ENCODE measurements at regions of chr3 and their contacts with region 1.

Region 1: GRCh38 chr3:39216176-39216790 is 23.9 kb upstream of the XIRP1 start:
- DNase-seq: peak; percentile 68
- ATAC-seq: peak; percentile 97
- H3K4me3 ChIP-seq: no peak overlapping the region
- H3K27ac ChIP-seq: no peak overlapping the region; the same call in 1 of the 2 replicates
- H3K4me1 ChIP-seq: peaks cover 26% of the 10 kb centered on the region
- H3K27me3 ChIP-seq: no peaks in the 10 kb centered on the region
- CTCF ChIP-seq: no peak
- EP300 ChIP-seq: peak; percentile 85 to 96
- POLR2A ChIP-seq: no peak
- RAD21 ChIP-seq: no peak

Region 2: DNA sequence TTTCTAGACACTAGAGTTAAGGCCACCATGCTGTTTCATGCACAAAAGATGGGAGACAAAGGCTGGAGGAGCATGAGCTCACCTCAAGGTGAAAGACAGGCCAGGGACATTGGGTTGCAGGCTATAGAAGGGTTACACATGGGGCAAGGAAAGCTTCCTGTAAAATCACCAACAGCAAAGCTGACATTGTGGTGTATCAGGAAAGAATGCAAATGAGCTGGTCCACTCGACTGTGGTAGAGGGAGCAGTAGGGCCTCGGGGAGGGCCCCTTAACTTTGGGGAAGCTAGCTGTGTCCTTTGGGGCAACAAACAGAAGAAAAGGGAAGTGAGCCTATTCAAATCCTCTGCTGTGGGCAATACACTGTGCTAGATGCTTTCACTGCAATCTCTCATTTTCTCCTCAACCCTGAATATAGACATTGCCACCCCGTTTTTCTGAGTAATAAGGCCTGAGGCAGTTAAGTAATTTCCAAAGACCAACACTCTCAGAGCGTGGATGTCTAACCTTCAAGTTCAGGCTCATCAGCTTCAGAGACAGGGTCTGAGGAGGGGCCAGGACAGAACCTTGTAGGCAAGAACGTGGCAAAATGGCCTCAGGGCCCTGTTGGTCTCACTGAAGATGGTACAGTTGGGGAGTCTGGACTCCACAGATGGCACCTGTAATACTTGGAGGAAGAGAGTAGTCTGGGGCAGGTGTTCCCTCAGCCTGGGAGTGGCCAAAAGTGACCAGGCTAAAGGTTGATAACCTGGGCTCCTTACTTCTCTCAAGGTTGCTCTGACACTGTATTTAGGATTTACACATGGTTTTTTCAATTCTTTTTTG is 39.4 kb after region 1 on chr3:
- CTCF ChIA-PET with region 1: interaction called, 12 read pairs
- POLR2A ChIA-PET with region 1: interaction called, 6 read pairs
- RAD21 ChIA-PET with region 1: interaction called, 19 read pairs
- SMC1A ChIA-PET with region 1: interaction called, 15 read pairs
- in situ Hi-C with region 1: no loop called
- intact Hi-C with region 1: loop called (anchors 2 kb)
- DNase-seq: peak; percentile 90
- ATAC-seq: peak; percentile 97
- H3K4me3 ChIP-seq: peak overlapping the region; percentile 39; the same call in 1 of the 2 replicates
- H3K27ac ChIP-seq: peak overlapping the region; percentile 93
- H3K4me1 ChIP-seq: peaks cover 30% of the 10 kb centered on the region
- H3K27me3 ChIP-seq: no peaks in the 10 kb centered on the region
- CTCF ChIP-seq: no peak
- EP300 ChIP-seq: peak; percentile 61 to 91; a peak in 3 of 4 replicates
- POLR2A ChIP-seq: no peak
- RAD21 ChIP-seq: no peak

Region 3: GRCh38 chr3:39260957-39261356 is 44.7 kb after region 1 on chr3:
- CTCF ChIA-PET with region 1: interaction called, 12 read pairs
- POLR2A ChIA-PET with region 1: interaction called, 6 read pairs
- RAD21 ChIA-PET with region 1: interaction called, 19 read pairs
- SMC1A ChIA-PET with region 1: interaction called, 15 read pairs
- in situ Hi-C with region 1: no loop called
- intact Hi-C with region 1: no loop called
- DNase-seq: peak; percentile 27
- ATAC-seq: peak; percentile 84
- H3K4me3 ChIP-seq: no peak overlapping the region
- H3K27ac ChIP-seq: no peak overlapping the region
- H3K4me1 ChIP-seq: peaks cover 16% of the 10 kb centered on the region
- H3K27me3 ChIP-seq: peaks cover 0 to 6% of the 10 kb centered on the region in 2 experiments; a peak in 2 of 4 replicates
- CTCF ChIP-seq: peak in 2 of 3 experiments; percentile 29 to 38; a peak in 2 of 6 replicates
- EP300 ChIP-seq: no peak
- POLR2A ChIP-seq: no peak
- RAD21 ChIP-seq: peak; percentile 35

Region 4: GRCh38 chr3:39267631-39268548 is 51.6 kb after region 1 on chr3:
- CTCF ChIA-PET with region 1: interaction called, 5 read pairs
- POLR2A ChIA-PET with region 1: interaction called, 3 read pairs
- RAD21 ChIA-PET with region 1: interaction called, 4 read pairs
- SMC1A ChIA-PET with region 1: interaction called, 12 read pairs
- in situ Hi-C with region 1: no loop called
- intact Hi-C with region 1: no loop called
- DNase-seq: no peak
- ATAC-seq: peak; percentile 84
- H3K4me3 ChIP-seq: no peak overlapping the region
- H3K27ac ChIP-seq: no peak overlapping the region
- H3K4me1 ChIP-seq: peaks cover 7% of the 10 kb centered on the region
- H3K27me3 ChIP-seq: no peaks in the 10 kb centered on the region; a peak in 1 of 4 replicates
- CTCF ChIP-seq: no peak
- EP300 ChIP-seq: 0 out of 4 replicates have a peak, but pooled peaks of 1 of the 2 experiments have one; percentile 28
- POLR2A ChIP-seq: no peak
- RAD21 ChIP-seq: no peak

Region 5: GRCh38 chr3:39273119-39273518 is 56.8 kb after region 1 on chr3:
- CTCF ChIA-PET with region 1: interaction called, 5 read pairs
- POLR2A ChIA-PET with region 1: interaction called, 3 read pairs
- RAD21 ChIA-PET with region 1: interaction called, 3 read pairs
- SMC1A ChIA-PET with region 1: interaction called, 12 read pairs
- in situ Hi-C with region 1: no loop called
- intact Hi-C with region 1: no loop called
- DNase-seq: no peak
- ATAC-seq: no peak
- H3K4me3 ChIP-seq: no peak overlapping the region
- H3K27ac ChIP-seq: no peak overlapping the region
- H3K4me1 ChIP-seq: peaks cover under 1% of the 10 kb centered on the region
- H3K27me3 ChIP-seq: peaks cover 0 to 3% of the 10 kb centered on the region in 2 experiments; a peak in 1 of 4 replicates
- CTCF ChIP-seq: no peak
- EP300 ChIP-seq: no peak
- POLR2A ChIP-seq: no peak
- RAD21 ChIP-seq: no peak